ENCODE measurements at regions of chr2 and their contacts with region 1.

Region 1: GRCh38 chr2:158202161-158202815 is 100.6 kb downstream of the UPP2 start:
- DNase-seq: peak; percentile 76
- H3K4me3 ChIP-seq: no peak overlapping the region
- H3K27ac ChIP-seq: peak overlapping the region; percentile 55
- H3K4me1 ChIP-seq: peaks cover 16% of the 10 kb centered on the region
- H3K27me3 ChIP-seq: peaks cover 0 to 2% of the 10 kb centered on the region in 2 experiments
- CTCF ChIP-seq: no peak
- POLR2A ChIP-seq: no peak

Region 2: DNA sequence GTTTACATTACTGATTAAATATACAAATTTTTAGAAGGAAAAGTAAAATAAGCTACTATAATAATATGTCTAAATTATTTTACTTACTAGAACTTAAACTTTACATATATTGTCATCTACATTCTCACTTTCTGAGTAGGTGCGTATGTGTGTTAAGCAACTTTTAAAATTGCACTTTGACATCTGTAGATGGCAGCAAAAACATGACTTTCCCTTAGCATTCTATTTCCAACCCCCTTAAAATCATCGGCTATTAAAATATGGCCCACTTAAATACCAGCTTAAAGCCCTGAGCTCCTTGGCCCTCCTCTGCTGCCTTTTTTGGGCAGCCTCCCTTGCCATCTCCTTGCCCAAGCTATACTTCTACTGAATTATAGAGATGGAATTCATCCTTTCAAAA is 22.6 kb before region 1 on chr2:
- CTCF ChIA-PET with region 1: interaction called, 10 read pairs
- POLR2A ChIA-PET with region 1: no interaction called
- dilution Hi-C with region 1: no loop called
- intact Hi-C with region 1: no loop called
- DNase-seq: peak; percentile 48
- H3K4me3 ChIP-seq: no peak overlapping the region
- H3K27ac ChIP-seq: no peak overlapping the region
- H3K4me1 ChIP-seq: no peaks in the 10 kb centered on the region
- H3K27me3 ChIP-seq: peaks cover 14 to 22% of the 10 kb centered on the region in 2 experiments
- CTCF ChIP-seq: peak in 1 of 2 donors; percentile 27
- POLR2A ChIP-seq: no peak

Region 3: GRCh38 chr2:158191076-158191895 is 11.0 kb before region 1 on chr2:
- CTCF ChIA-PET with region 1: interaction called, 10 read pairs
- POLR2A ChIA-PET with region 1: no interaction called
- dilution Hi-C with region 1: no loop called
- intact Hi-C with region 1: loop called (anchors 1 kb)
- DNase-seq: no peak
- H3K4me3 ChIP-seq: no peak overlapping the region
- H3K27ac ChIP-seq: no peak overlapping the region
- H3K4me1 ChIP-seq: peaks cover 22% of the 10 kb centered on the region
- H3K27me3 ChIP-seq: peaks cover 2 to 4% of the 10 kb centered on the region in 2 experiments
- CTCF ChIP-seq: no peak
- POLR2A ChIP-seq: no peak

Region 4: GRCh38 chr2:158214438-158214837 is 12.2 kb after region 1 on chr2:
- CTCF ChIA-PET with region 1: interaction called, 15 read pairs
- POLR2A ChIA-PET with region 1: interaction called, 8 read pairs
- dilution Hi-C with region 1: no loop called
- intact Hi-C with region 1: loop called (anchors 1 kb)
- DNase-seq: peak; percentile 82
- H3K4me3 ChIP-seq: no peak overlapping the region
- H3K27ac ChIP-seq: peak overlapping the region; percentile 63
- H3K4me1 ChIP-seq: peaks cover 8% of the 10 kb centered on the region
- H3K27me3 ChIP-seq: peaks cover 3 to 4% of the 10 kb centered on the region in 2 experiments
- CTCF ChIP-seq: no peak
- POLR2A ChIP-seq: no peak